A673 (cell line): ENCODE measurements at regions of chr11 and their contacts with region 1.

Region 1: DNA sequence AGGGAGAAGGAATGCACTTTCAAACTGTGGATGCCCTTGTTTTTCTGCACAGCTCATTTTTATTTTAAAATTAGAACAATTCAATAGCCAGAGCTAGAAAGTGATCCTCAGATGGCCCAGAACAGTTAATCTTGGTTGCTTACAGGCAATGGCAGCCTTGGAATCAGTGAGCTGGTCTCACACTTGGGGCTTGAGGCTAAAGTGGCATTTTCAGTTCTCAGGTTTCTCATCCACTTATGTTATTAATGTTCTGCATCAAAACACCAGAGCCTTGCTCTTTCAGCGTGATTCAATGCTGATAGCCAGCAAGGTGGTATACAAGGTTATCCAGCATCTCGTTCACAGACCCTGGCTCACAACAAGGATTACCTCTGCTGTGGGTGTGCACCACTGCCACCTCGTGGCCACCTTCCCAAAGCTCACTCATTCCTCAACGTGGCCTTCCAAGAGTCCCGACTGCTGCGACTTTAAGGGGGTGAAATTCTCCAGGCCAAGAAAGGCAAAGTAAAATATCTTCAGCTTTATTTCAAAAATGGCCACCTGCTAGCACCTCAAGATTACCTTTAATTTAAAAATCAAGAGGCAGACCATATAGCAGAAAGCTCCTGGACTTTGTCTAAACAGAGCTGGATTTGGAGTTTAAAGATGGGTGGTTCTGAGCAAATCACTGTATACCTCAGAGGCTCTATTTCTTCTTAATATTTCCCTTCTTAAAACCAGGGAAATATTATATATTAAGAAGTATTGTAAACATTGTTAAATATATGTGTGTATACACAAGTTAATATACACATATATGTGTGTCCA is 34.2 kb upstream of the FSHB start:
- DNase-seq: peak; percentile 85
- H3K4me3 ChIP-seq: no peak overlapping the region
- H3K27ac ChIP-seq: no peak overlapping the region
- H3K4me1 ChIP-seq: no peaks in the 10 kb centered on the region
- H3K27me3 ChIP-seq: no peaks in the 10 kb centered on the region
- CTCF ChIP-seq: peak; percentile 100

Region 2: DNA sequence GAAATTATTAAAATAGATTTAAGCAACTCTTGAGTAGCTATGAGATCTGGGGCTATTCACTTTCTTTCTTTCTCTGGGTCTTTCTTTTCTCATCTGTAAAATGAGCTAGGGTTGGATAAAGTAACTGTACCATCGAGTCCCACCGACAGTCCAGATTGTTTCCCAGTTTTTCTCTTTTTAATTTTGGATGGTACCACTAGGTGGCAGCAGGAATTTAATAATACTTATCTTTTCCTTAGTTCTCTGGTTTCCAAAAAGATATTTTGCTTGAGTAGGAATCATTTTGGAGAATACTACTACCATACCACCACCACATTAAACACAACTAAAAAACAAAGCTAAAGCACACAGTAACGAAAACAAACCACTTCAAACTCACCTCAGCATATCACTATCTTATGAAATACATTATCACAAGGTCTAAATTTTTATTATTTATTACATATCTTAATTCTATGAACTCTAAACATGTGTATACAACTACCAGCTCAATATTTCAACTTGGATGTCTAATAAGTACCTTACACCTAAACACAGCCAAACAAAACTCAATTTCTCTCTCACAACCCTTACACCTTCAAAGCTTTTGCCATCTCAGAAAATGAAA is 763.8 kb before region 1 on chr11:
- CTCF ChIA-PET with region 1: interaction called, 4 read pairs
- POLR2A ChIA-PET with region 1: no interaction called
- intact Hi-C with region 1: loop called (anchors 2 kb)
- DNase-seq: peak; percentile 81
- H3K4me3 ChIP-seq: no peak overlapping the region
- H3K27ac ChIP-seq: no peak overlapping the region
- H3K4me1 ChIP-seq: no peaks in the 10 kb centered on the region
- H3K27me3 ChIP-seq: peaks cover 10% of the 10 kb centered on the region
- CTCF ChIP-seq: peak; percentile 92

Region 3: DNA sequence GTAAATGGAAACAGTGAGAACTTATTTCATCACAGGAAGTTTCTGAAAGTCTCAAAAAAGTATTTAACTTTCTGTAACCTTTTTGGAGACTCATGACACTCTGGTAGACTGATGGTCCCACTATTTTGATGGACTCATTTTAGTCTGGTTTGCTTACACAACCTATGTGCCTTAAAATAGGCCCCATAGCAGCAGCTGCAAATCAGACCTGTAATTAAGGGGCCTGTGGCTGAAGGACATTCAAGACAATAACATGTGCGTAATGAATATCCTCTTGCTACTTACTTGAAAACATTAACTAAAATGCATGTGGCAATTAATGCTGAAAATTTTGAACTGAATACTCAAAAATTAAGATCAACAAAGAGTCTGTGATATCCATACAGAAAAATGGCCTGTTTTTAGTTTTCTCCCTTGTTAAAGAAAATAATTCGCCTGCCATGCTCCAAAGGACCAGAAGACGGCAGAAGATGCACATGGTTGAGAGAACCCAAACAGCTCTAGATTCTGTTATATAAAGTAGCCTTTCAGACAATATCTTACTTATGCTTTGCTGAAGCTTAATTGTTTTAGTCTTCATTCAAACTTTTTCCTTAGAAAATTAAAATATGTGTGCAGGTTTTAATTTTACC is 748.2 kb before region 1 on chr11:
- CTCF ChIA-PET with region 1: interaction called, 7 read pairs
- POLR2A ChIA-PET with region 1: no interaction called
- intact Hi-C with region 1: loop called (anchors 1 kb)
- DNase-seq: peak; percentile 44
- H3K4me3 ChIP-seq: no peak overlapping the region
- H3K27ac ChIP-seq: no peak overlapping the region
- H3K4me1 ChIP-seq: no peaks in the 10 kb centered on the region
- H3K27me3 ChIP-seq: peaks cover 5% of the 10 kb centered on the region
- CTCF ChIP-seq: peak; percentile 56

Region 4: GRCh38 chr11:30128269-30128932 is 68.2 kb before region 1 on chr11:
- CTCF ChIA-PET with region 1: interaction called, 11 read pairs
- POLR2A ChIA-PET with region 1: no interaction called
- intact Hi-C with region 1: no loop called
- DNase-seq: peak; percentile 78
- H3K4me3 ChIP-seq: no peak overlapping the region
- H3K27ac ChIP-seq: no peak overlapping the region
- H3K4me1 ChIP-seq: no peaks in the 10 kb centered on the region
- H3K27me3 ChIP-seq: no peaks in the 10 kb centered on the region
- CTCF ChIP-seq: peak; percentile 99

Region 5: DNA sequence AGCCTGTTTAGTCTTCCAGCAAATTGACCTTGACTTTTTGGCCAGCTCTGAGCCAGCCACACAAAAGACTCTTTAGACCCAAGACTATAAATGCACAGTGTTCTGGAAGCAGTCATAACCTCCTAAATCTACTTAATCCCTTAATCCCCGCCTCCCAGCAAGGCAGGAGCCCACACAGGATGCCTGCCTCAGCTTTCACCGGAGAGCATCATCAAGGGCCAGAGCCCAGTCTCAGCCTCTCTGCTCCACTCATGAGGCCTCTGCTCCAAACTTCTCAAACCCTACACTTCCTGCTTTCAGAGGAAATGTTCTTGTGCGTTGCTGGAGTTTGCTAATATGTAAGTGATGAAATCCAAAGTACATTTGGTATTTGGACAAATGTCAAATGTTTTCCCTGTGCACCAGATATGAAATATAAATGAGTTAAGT is 23.7 kb before region 1 on chr11:
- CTCF ChIA-PET with region 1: no interaction called
- POLR2A ChIA-PET with region 1: no interaction called
- intact Hi-C with region 1: loop called (anchors 2 kb)
- DNase-seq: peak; percentile 28
- H3K4me3 ChIP-seq: no peak overlapping the region
- H3K27ac ChIP-seq: no peak overlapping the region
- H3K4me1 ChIP-seq: no peaks in the 10 kb centered on the region
- H3K27me3 ChIP-seq: peaks cover 4% of the 10 kb centered on the region
- CTCF ChIP-seq: no peak